ENCODE measurements at regions of chr16 and their contacts with region 1.

Region 1: GRCh38 chr16:66618588-66619375 is 14.3 kb downstream of the CMTM3 start:
- DNase-seq: peak; percentile 96
- H3K4me3 Mint-ChIP-seq: peak overlapping the region; percentile 47
- H3K27ac Mint-ChIP-seq: peak overlapping the region; percentile 75
- H3K4me1 Mint-ChIP-seq: peaks cover 32% of the 10 kb centered on the region
- H3K27me3 Mint-ChIP-seq: no peaks in the 10 kb centered on the region
- CTCF ChIP-seq: no peak

Region 2: DNA sequence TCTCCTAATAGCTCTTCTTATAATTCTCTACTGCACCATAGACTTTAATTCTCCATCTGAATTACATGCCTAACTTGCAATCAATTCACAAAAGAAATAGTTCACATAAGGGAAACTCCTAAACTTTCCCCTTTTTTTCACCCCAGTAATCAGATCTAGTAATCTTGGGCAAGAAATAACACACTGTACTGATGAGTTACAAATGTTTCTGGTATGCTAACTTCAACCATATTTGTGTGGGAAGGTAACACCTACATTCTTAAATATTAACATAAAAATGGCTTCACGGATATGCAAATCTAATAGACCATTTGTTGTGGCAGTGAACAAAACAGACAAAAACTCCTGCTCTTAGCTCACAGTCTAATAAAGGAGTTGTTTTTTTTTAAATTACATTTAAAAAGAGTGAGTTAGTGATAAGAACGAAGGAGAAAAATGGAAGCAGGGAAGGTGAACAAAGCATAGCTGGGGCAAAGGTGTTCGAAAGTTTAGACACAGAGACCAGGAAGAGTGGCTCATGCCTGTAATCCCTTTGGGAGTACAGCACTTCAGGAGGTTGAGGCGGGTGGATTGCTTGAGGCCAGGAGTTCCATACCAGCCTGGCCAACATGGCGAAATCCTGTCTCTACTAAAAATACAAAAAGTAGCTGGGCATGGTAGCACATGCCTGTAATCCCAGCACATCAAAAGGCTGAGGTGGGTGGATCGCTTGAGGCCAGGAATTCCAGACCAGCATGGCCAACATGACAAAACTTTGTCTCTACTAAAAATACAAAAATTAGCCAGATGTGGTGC is 20.5 kb after region 1 on chr16:
- CTCF ChIA-PET with region 1: interaction called, 5 read pairs
- POLR2A ChIA-PET with region 1: interaction called, 18 read pairs
- intact Hi-C with region 1: no loop called
- DNase-seq: peak; percentile 38
- H3K4me3 Mint-ChIP-seq: peak overlapping the region; percentile 56
- H3K27ac Mint-ChIP-seq: peak overlapping the region; percentile 98
- H3K4me1 Mint-ChIP-seq: peaks cover 18% of the 10 kb centered on the region
- H3K27me3 Mint-ChIP-seq: no peaks in the 10 kb centered on the region
- CTCF ChIP-seq: no peak